Heart right ventricle (tissue), 16 donors: ENCODE measurements at regions of chr1 and their contacts with region 1.

Region 1: GRCh38 chr1:86833461-86834215 is 80.3 kb downstream of the SELENOF start:
- DNase-seq: peak; percentile 19 to 76
- ATAC-seq: peak; percentile 67 to 93 (median 80)
- H3K4me3 ChIP-seq: no peak overlapping the region
- H3K27ac ChIP-seq: no peak overlapping the region
- H3K4me1 ChIP-seq: peaks cover 0 to 4% (median 0%) of the 10 kb centered on the region in 9 donors
- H3K27me3 ChIP-seq: no peaks in the 10 kb centered on the region
- CTCF ChIP-seq: peak; percentile 39 to 74 (median 66)

Region 2: DNA sequence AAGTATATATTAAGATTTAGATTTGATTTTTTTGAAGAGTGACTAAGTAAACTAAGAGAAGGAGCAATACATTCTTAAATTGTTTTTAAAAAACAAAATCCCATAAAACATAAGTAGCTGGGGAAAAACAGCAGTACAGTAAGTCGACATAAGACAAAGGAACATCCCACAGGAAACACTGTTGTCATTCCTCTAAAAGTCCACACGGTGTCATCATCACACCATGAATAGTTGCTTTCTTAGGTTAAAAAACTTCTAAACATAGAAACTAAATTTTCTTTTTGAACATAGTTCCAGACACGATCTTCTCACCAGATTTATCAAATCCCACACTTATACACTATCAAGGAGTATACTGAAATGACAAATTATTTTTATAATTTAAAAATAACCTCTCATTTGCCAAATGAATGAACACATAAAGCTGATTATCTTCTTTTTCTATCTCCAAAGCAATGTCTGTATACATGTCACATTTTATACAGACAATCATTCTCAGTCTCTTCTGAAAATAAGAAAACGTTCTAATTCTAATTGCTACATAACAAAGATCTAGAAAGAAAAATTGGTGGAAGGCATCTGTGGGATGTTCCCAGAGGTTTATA is 453.3 kb before region 1 on chr1:
- intact Hi-C with region 1: loop called in 1 of 10 experiments (anchors 5 kb)
- DNase-seq: no peak
- ATAC-seq: peak in 5 of 8 donors; percentile 58 to 77 (median 65)
- H3K4me3 ChIP-seq: peak overlapping the region in 4 of 10 donors; percentile 10 to 43 (median 22)
- H3K27ac ChIP-seq: peak overlapping the region in 1 of 10 donors; percentile 31
- H3K4me1 ChIP-seq: peaks cover 0 to 23% (median 0%) of the 10 kb centered on the region in 9 donors
- H3K27me3 ChIP-seq: no peaks in the 10 kb centered on the region
- CTCF ChIP-seq: peak; percentile 39 to 94 (median 82)

Region 3: GRCh38 chr1:86507935-86508582 is 325.6 kb before region 1 on chr1:
- intact Hi-C with region 1: no loop called
- DNase-seq: no peak
- ATAC-seq: no peak
- H3K4me3 ChIP-seq: no peak overlapping the region
- H3K27ac ChIP-seq: no peak overlapping the region
- H3K4me1 ChIP-seq: peaks cover 0 to 22% (median 13%) of the 10 kb centered on the region in 9 donors
- H3K27me3 ChIP-seq: no peaks in the 10 kb centered on the region
- CTCF ChIP-seq: peak; percentile 17 to 70 (median 58)

Region 4: GRCh38 chr1:86965012-86965826 is 131.6 kb after region 1 on chr1:
- intact Hi-C with region 1: loop called (anchors 1 to 10 kb)
- DNase-seq: peak in 1 of 2 donors; percentile 19
- ATAC-seq: peak in 2 of 8 donors; percentile 14 to 65
- H3K4me3 ChIP-seq: no peak overlapping the region
- H3K27ac ChIP-seq: no peak overlapping the region
- H3K4me1 ChIP-seq: peaks cover 0 to 3% (median 0%) of the 10 kb centered on the region in 9 donors
- H3K27me3 ChIP-seq: no peaks in the 10 kb centered on the region
- CTCF ChIP-seq: peak; percentile 24 to 74 (median 62)

Region 5: GRCh38 chr1:87024936-87025540 is 191.4 kb after region 1 on chr1:
- intact Hi-C with region 1: loop called in 1 of 10 experiments (anchors 5 kb)
- DNase-seq: no peak
- ATAC-seq: peak in 5 of 8 donors; percentile 44 to 63 (median 57)
- H3K4me3 ChIP-seq: no peak overlapping the region
- H3K27ac ChIP-seq: no peak overlapping the region
- H3K4me1 ChIP-seq: peaks cover 0 to 24% (median 7%) of the 10 kb centered on the region in 9 donors
- H3K27me3 ChIP-seq: no peaks in the 10 kb centered on the region
- CTCF ChIP-seq: peak in 8 of 9 donors; percentile 26 to 67 (median 51)